ENCODE measurements at regions of chr1 and their contacts with region 1.

Region 1: GRCh38 chr1:202615501-202616354 is 94.5 kb downstream of the SYT2 start:
- DNase-seq: peak; percentile 73
- H3K4me3 ChIP-seq: peak overlapping the region; percentile 28
- H3K27ac ChIP-seq: no peak overlapping the region
- H3K4me1 ChIP-seq: peaks cover 22% of the 10 kb centered on the region
- CTCF ChIP-seq: no peak

Region 2: DNA sequence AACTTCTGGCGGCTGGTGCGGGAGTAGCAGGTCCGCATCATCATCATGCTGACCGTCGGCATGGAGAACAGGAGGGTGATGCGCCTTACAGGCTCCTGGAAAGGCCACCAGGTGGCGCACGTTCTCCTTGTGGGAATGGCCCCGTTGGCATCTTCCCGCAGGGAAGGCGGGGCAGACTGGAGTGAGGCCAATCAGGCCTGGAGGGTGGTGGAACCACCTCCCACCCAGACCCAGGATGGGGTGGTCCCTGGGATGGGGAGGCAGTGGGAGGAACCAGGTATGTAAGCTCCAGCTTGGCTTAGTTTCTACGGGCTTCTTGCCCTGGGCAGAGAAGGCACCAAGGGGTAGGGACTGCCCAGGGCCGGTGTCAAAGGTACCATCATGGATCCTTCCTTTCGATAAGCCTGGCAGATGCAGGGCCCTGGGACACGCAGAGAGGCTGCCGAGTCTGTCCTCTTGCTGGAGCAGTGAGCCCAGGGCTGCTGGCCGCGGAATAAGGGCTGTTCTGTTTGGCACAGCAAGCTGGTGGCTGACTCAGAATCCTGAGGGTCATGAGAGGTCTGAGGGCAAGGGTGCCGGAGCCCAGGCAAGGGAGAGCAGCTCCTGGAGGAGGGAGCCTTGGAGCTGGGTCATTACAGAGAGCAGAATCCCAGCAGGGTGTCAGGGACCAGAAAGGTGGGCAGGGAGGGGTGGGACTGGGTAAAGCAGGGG is 430.8 kb before region 1 on chr1:
- CTCF ChIA-PET with region 1: no interaction called
- POLR2A ChIA-PET with region 1: no interaction called
- intact Hi-C with region 1: loop called (anchors 10 kb)
- DNase-seq: peak; percentile 68
- H3K4me3 ChIP-seq: no peak overlapping the region
- H3K27ac ChIP-seq: no peak overlapping the region
- H3K4me1 ChIP-seq: no peaks in the 10 kb centered on the region
- CTCF ChIP-seq: peak; percentile 83

Region 3: DNA sequence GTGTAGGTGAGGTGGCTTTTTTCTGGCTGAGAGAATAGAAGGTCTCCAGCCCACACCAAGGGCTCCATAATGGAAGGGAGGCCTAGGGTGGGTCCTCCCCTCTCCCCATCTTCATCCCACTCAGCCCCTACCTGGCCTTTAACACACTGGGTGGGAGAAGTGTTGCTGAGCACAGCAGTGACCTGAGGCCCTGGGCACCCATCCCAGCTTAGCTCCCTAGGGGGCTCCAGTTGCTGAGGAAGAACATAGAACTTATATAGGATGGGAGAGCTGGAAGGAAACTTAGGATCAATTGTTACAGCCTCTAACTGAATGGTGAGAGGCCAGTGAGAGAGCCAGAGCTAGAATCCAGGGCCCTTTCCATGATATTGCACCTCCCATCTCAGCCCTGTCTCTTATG is 17.7 kb after region 1 on chr1:
- CTCF ChIA-PET with region 1: no interaction called
- POLR2A ChIA-PET with region 1: no interaction called
- intact Hi-C with region 1: no loop called
- DNase-seq: no peak
- H3K4me3 ChIP-seq: no peak overlapping the region
- H3K27ac ChIP-seq: no peak overlapping the region
- H3K4me1 ChIP-seq: peaks cover 8% of the 10 kb centered on the region
- CTCF ChIP-seq: no peak

Region 4: DNA sequence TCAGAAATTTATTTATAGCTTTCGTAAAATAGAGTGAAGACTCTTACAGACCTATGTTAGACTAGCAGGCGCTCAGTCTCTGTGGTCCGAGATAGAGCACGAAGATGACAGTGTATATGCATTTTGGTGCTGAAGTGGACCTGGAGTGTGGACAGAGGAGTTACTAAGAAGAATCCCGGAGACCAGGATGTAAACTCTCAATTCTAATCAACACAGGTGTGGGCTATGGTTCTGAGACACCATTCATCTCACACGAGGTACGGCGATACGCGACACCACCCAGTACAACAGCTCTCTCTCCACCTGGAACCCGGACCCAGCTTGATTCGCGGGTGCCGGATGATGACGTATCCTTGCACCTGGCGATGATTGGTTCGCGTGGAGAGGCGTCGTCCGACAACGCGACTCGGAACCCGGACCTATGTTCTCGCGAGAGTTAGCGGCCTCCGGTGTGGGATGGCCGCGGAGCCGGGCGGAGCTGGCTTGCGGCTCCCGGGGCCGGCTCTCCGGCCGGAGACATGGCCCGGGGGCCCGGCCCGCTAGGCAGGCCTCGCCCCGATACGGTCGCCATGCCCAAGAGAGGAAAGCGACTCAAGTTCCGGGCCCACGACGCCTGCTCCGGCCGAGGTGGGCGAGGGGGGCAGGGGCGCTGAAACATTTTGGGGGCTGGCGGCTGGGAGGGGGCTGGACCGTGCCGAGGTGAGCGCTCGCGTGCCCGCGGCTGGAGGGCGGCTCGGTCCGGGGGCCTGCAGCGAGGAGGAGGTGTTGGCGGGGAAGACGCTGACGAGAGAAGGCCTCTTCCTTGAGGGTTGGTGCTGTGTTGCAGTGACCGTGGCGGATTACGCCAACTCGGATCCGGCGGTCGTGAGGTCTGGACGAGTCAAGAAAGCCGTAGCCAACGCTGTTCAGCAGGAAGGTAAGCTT is 391.5 kb after region 1 on chr1 and contains the start of gene TMEM183A:
- CTCF ChIA-PET with region 1: no interaction called
- POLR2A ChIA-PET with region 1: no interaction called
- intact Hi-C with region 1: loop called (anchors 10 kb)
- DNase-seq: peak; percentile 99
- H3K4me3 ChIP-seq: peak within 1 kb of the TSS; percentile 84
- H3K27ac ChIP-seq: peak within 1 kb of the TSS; percentile 54
- H3K4me1 ChIP-seq: peaks cover 17% of the 10 kb centered on the region
- CTCF ChIP-seq: no peak
- total RNA-seq, gene TMEM183A: 92.4 and 99.3 TPM in 2 replicates

Measured in OCI-LY7 (cell line).